ENCODE measurements at regions of chr21 and their contacts with region 1.

Region 1: DNA sequence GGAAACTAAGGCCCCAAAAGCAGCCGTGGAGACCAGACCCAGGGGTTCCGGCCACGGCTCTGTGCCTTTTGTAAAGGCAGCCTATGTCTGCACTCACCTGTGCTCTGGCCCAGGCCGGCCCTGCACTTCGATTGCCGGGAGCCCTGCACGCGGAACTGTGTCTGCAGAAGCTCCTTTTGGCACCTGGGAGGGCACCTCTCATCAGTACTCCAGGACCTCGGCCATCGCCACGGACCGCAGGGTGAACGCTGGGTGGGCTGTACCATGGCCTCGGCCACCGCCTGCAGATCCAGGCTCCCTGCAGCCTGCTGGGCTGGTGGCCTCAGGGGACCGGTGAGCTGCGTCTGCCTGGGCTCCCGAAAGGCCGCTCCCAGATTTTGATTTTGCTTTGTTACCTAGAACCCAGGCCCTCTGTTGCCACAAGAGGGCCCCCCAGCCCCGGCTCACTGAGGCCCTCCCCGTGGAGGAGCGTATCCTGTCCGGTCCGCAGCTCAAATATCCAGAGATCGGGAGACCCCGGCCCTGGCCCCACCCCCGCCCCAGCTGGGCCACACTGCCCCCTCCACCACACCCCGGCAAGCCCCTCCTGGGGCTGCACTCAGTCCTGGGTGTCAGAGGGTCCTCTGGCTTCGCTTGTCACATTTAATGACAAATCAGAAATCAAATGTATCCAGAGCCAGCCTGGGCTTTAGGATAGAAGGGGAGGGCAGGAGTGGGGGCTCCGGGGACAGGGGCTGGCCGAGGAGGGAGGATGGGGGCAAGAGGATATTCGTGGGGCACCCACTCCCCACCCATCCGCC is 60.2 kb upstream of the PDE9A start:
- DNase-seq: peak; percentile 78 to 90
- H3K4me3 ChIP-seq: peak overlapping the region in 2 of 4 donors; percentile 20 to 24
- H3K27ac ChIP-seq: peak overlapping the region in 1 of 5 donors; percentile 29
- H3K4me1 ChIP-seq: peaks cover 8 to 12% (median 12%) of the 10 kb centered on the region in 4 donors
- H3K27me3 ChIP-seq: peaks cover 0 to 22% (median 0%) of the 10 kb centered on the region in 3 donors
- CTCF ChIP-seq: peak in 5 of 7 experiments; percentile 30 to 71 (median 57)
- EP300 ChIP-seq: no peak
- POLR2A ChIP-seq: no peak

Region 2: GRCh38 chr21:41992576-41992975 is 600.6 kb before region 1 on chr21:
- intact Hi-C with region 1: no loop called
- DNase-seq: no peak
- H3K4me3 ChIP-seq: no peak overlapping the region
- H3K27ac ChIP-seq: no peak overlapping the region
- H3K4me1 ChIP-seq: no peaks in the 10 kb centered on the region
- H3K27me3 ChIP-seq: no peaks in the 10 kb centered on the region
- CTCF ChIP-seq: no peak
- EP300 ChIP-seq: no peak
- POLR2A ChIP-seq: no peak

Region 3: DNA sequence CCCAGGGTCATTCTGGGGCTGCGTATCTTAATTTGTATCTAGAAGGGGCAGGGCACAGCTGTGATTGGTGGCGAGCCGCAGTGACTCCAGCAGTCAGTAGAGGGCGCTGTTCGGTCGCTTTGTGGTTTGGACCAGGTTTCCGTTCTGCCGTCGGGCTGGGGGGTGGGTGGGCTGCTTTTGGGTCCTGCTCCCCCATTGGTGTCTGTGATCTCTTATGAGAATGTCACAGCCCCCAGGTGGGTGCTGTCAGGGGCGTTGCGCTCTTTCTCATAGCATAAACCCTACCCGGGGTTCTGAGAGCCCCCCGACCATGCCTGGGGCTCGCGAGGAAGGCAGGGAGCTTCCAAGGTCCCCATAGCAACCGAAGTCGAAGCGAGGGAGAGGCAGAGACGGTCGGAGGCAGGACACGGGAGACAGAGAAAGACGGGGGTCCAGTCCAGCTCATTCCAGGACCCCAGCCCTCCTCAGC is 283.4 kb before region 1 on chr21:
- intact Hi-C with region 1: no loop called
- DNase-seq: peak; percentile 75 to 87
- H3K4me3 ChIP-seq: no peak overlapping the region
- H3K27ac ChIP-seq: no peak overlapping the region
- H3K4me1 ChIP-seq: peaks cover 8 to 37% (median 26%) of the 10 kb centered on the region in 4 donors
- H3K27me3 ChIP-seq: peaks cover 0 to 68% (median 10%) of the 10 kb centered on the region in 3 donors
- CTCF ChIP-seq: peak in 5 of 7 experiments; percentile 47 to 84 (median 74)
- EP300 ChIP-seq: no peak
- POLR2A ChIP-seq: no peak

Region 4: GRCh38 chr21:42652527-42653230 is 59.5 kb after region 1 on chr21:
- intact Hi-C with region 1: loop called (anchors 10 kb)
- DNase-seq: peak; percentile 75 to 85
- H3K4me3 ChIP-seq: peak overlapping the region; percentile 61 to 74 (median 72)
- H3K27ac ChIP-seq: peak overlapping the region; percentile 49 to 87 (median 77)
- H3K4me1 ChIP-seq: peaks cover 27 to 57% (median 39%) of the 10 kb centered on the region in 4 donors
- H3K27me3 ChIP-seq: peaks cover 0 to 74% (median 19%) of the 10 kb centered on the region in 3 donors
- CTCF ChIP-seq: peak in 5 of 7 experiments; percentile 37 to 78 (median 50)
- EP300 ChIP-seq: no peak
- POLR2A ChIP-seq: no peak

Region 5: GRCh38 chr21:42818328-42818749 is 225.1 kb after region 1 on chr21:
- intact Hi-C with region 1: loop called (anchors 10 kb)
- DNase-seq: peak; percentile 75 to 78
- H3K4me3 ChIP-seq: no peak overlapping the region
- H3K27ac ChIP-seq: no peak overlapping the region
- H3K4me1 ChIP-seq: peaks cover 0 to 7% (median 3%) of the 10 kb centered on the region in 4 donors
- H3K27me3 ChIP-seq: peaks cover 0 to 10% (median 0%) of the 10 kb centered on the region in 3 donors
- CTCF ChIP-seq: peak in 5 of 7 experiments; percentile 84 to 92 (median 88)
- EP300 ChIP-seq: no peak
- POLR2A ChIP-seq: no peak